GM12878 (cell line): ENCODE measurements at regions of chr9 and their contacts with region 1.

Region 1: GRCh38 chr9:132249123-132249522 is 87.3 kb downstream of the NTNG2 start:
- DNase-seq: no peak
- ATAC-seq: no peak
- H3K4me3 ChIP-seq: no peak overlapping the region
- H3K27ac ChIP-seq: no peak overlapping the region
- H3K4me1 ChIP-seq: no peaks in the 10 kb centered on the region
- H3K27me3 ChIP-seq: no peaks in the 10 kb centered on the region; a peak in 1 of 4 replicates
- CTCF ChIP-seq: no peak
- EP300 ChIP-seq: no peak
- POLR2A ChIP-seq: no peak
- RAD21 ChIP-seq: no peak

Region 2: DNA sequence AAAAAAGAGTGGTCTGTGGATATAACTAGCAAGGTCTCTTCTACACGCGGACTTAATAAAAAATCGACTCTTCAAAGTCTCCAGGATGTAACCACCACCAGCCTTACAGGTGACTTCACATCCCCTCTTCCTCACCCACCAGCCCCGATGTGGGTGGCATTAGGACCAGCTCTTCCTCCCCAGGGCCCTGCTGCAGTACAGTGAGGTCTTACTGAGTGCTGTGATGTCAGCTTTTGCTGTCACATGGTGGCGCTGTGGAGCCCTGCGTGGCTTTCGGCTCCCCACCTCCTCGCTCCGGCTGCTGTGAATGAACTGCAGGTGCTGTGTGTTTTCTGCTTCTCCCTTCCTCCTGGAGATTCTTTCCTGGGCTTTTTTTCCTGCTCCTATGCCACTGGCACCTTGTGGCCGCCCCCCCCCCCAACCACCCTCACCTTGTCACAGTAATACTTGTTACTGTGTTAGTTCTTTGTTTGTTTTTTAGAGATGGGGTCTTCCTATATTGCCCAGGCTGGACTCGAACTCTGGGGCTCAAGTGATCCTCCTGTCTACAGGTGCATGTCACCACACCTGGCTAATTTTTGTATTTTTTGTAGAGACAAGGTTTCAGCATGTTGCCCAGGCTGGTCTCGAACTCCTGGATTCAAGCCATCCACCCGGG is 493.5 kb before region 1 on chr9:
- CTCF ChIA-PET with region 1: interaction called, 11 read pairs
- POLR2A ChIA-PET with region 1: no interaction called
- RAD21 ChIA-PET with region 1: interaction called, 4 read pairs
- SMC1A ChIA-PET with region 1: interaction called, 4 read pairs
- in situ Hi-C with region 1: loop called (anchors 5 kb)
- intact Hi-C with region 1: no loop called
- DNase-seq: no peak
- ATAC-seq: peak; percentile 99
- H3K4me3 ChIP-seq: no peak overlapping the region
- H3K27ac ChIP-seq: no peak overlapping the region
- H3K4me1 ChIP-seq: no peaks in the 10 kb centered on the region
- H3K27me3 ChIP-seq: no peaks in the 10 kb centered on the region; a peak in 2 of 4 replicates
- CTCF ChIP-seq: peak; percentile 87 to 95 (median 94)
- EP300 ChIP-seq: no peak
- POLR2A ChIP-seq: no peak
- RAD21 ChIP-seq: peak; percentile 53

Region 3: GRCh38 chr9:132169672-132170392 is 79.3 kb before region 1 on chr9:
- CTCF ChIA-PET with region 1: interaction called, 26 read pairs
- POLR2A ChIA-PET with region 1: no interaction called
- RAD21 ChIA-PET with region 1: interaction called, 5 read pairs
- SMC1A ChIA-PET with region 1: interaction called, 3 read pairs
- in situ Hi-C with region 1: no loop called
- intact Hi-C with region 1: no loop called
- DNase-seq: no peak
- ATAC-seq: peak; percentile 91
- H3K4me3 ChIP-seq: no peak overlapping the region
- H3K27ac ChIP-seq: no peak overlapping the region
- H3K4me1 ChIP-seq: no peaks in the 10 kb centered on the region
- H3K27me3 ChIP-seq: peaks cover 0 to 4% of the 10 kb centered on the region in 2 experiments
- CTCF ChIP-seq: peak; percentile 74 to 92 (median 83)
- EP300 ChIP-seq: no peak
- POLR2A ChIP-seq: no peak
- RAD21 ChIP-seq: peak; percentile 48; the same call in 1 of the 2 replicates

Region 4: DNA sequence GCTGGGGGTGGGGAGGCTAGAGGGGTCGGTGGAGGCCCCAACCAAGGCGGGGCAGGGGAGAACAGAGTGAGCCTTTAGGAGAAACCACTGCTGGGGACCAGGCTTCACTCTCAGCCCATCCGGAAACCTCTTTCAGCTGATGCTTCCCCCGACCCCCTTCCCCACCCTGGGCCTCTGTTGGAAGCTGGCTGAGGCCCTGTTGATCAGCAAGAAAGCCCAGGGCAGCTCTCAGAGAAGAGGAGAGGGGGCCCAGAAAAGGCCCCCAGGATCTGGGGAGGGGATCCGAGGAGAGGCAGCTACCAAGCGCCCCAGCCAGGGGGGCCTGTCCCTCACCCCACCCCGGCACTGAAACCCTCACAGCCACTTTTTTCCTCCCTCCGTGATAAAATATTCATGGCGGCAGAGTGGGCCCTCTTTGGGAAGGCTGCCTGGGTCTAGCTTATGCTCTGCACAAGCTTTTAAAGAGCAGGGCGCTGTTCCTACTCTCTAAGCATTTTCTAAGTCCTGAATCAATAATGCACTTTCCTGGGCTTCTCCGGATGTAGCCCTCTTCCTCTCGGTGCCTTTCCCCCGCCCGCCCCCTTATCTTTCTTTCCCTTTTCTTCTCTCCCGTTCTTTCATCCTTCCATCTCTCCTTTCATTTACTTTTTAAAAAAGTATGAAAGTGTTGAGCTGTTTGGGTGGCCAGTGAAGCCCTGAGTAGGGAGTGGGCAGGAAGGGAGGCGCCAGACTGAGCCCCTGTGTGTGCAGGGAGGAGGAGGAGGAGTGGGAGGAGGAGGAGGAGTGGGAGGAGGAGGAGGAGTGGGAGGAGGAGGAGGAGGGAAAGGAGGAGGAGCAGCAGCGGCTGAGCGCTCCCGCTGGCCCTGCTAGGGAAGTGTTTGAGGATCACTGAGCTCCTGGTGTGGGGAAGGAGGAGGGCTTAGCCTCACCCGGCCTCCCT is 63.8 kb before region 1 on chr9:
- CTCF ChIA-PET with region 1: no interaction called
- POLR2A ChIA-PET with region 1: no interaction called
- RAD21 ChIA-PET with region 1: no interaction called
- SMC1A ChIA-PET with region 1: no interaction called
- in situ Hi-C with region 1: no loop called
- intact Hi-C with region 1: no loop called
- DNase-seq: no peak
- ATAC-seq: no peak
- H3K4me3 ChIP-seq: no peak overlapping the region
- H3K27ac ChIP-seq: no peak overlapping the region
- H3K4me1 ChIP-seq: peaks cover 4% of the 10 kb centered on the region
- H3K27me3 ChIP-seq: no peaks in the 10 kb centered on the region; a peak in 1 of 4 replicates
- CTCF ChIP-seq: no peak
- EP300 ChIP-seq: no peak
- POLR2A ChIP-seq: no peak
- RAD21 ChIP-seq: no peak

Region 5: GRCh38 chr9:132387133-132387532 is 138.0 kb after region 1 on chr9:
- CTCF ChIA-PET with region 1: no interaction called
- POLR2A ChIA-PET with region 1: no interaction called
- RAD21 ChIA-PET with region 1: no interaction called
- SMC1A ChIA-PET with region 1: no interaction called
- in situ Hi-C with region 1: no loop called
- intact Hi-C with region 1: no loop called
- DNase-seq: no peak
- ATAC-seq: no peak
- H3K4me3 ChIP-seq: no peak overlapping the region
- H3K27ac ChIP-seq: no peak overlapping the region
- H3K4me1 ChIP-seq: peaks cover 29% of the 10 kb centered on the region
- H3K27me3 ChIP-seq: no peaks in the 10 kb centered on the region
- CTCF ChIP-seq: no peak
- EP300 ChIP-seq: no peak
- POLR2A ChIP-seq: no peak
- RAD21 ChIP-seq: no peak